ENCODE measurements at regions of chr7 and their contacts with region 1.

Region 1: GRCh38 chr7:74173866-74174605 is at the start of gene EIF4H:
- DNase-seq: peak; percentile 87 to 98 (median 95)

Region 2: DNA sequence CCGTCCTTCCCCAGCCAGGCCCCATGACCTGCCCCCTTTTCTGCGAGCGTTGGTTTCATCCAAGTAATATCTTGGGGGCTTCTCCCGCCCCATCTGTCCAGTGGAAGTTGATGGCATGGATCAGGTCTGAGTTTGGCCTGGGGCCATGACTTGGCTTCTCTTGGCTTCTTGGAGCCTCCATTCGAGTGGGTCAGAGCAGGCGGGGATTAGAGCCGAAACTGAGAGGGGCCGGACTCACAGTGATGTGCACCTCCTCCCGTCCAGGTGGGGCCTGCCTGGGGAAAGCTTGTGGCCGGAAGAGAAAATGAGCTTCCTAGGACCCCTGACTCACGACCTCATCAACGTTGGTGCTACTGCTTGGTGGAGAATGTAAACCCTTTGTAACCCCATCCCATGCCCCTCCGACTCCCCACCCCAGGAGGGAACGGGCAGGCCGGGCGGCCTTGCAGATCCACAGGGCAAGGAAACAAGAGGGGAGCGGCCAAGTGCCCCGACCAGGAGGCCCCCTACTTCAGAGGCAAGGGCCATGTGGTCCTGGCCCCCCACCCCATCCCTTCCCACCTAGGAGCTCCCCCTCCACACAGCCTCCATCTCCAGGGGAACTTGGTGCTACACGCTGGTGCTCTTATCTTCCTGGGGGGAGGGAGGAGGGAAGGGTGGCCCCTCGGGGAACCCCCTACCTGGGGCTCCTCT is 105.5 kb before region 1 on chr7:
- intact Hi-C with region 1: loop called (anchors 5 kb)
- DNase-seq: no peak

Region 3: DNA sequence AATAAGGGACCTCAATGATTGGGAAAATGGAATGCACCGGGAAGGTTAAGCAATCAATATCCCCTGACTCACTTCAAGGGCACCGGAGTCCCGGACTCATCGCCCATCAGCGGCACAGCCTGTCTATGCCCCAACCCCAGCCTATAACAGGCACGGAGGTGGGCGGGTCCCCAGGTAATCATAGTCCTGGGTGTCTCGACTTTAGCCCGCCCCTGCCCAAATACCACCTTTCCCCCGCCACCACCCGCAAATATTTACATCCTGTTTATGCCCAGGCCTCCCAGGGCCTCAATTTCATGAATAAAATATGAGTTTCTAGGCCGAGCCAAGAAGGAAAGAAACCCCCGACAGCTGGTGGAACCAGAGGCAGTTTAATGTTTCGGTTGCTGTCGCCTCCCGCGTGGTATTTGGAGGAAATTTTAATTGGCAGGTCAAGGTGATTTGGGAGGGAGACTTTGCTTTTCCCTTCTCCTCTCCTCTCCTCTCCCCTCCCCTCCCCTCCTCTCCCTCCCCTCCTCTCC is 95.8 kb after region 1 on chr7:
- intact Hi-C with region 1: no loop called
- DNase-seq: peak in 41 of 42 donors; percentile 37 to 89 (median 73)

Region 4: GRCh38 chr7:74355091-74355490 is 181.1 kb after region 1 on chr7:
- intact Hi-C with region 1: no loop called
- DNase-seq: peak in 19 of 42 donors; percentile 18 to 83 (median 38)